ENCODE measurements at regions of chr11 and their contacts with region 1.

Region 1: DNA sequence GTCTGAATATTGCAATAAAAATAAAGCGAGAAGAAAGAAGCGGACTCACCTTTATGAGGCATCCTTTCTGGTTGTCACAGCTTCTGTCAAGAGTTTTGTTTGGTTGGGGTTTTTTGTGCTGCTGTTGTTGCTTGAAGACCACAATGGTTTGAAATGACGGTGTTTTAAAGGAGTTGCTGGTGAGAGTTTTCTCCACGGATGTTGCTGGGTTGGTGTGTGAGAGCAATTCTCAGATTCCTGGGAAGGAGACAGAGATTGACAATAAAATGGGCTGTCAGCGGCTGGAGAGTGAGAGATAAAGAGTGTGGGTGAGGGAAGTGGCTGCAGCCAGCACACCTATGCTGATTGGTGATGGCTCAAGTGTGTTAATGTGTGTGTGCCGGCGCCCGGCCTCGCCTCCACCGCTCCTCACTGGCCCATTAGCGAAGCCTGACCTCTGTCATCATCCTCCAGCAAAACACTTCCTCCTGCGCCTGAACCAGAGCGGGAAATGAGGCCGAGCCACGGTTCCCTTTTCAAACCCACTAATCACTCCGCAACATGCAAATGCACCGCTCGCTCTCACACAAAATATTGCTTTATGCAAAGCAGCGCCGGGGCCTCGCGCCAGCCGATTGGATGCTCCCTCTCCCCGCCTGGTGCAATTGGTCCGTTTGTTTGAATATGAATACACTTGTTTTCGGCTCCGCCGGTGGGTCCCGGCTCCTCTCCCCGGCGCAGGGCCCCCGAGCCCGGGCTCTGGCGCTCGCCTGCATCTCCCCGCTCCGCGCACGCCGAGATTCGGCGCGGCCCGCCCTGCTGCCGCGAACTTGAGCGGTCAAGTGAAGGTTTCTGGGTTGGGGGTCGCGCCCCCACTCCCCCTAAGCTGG is at the start of gene PAX6:
- DNase-seq: peak; percentile 82
- H3K4me3 Mint-ChIP-seq: peak within 1 kb of the TSS; percentile 73
- H3K27ac Mint-ChIP-seq: no peak within 1 kb of the TSS
- H3K4me1 Mint-ChIP-seq: peaks cover 47% of the 10 kb centered on the region
- H3K27me3 Mint-ChIP-seq: peaks cover 76% of the 10 kb centered on the region
- total RNA-seq, gene PAX6: 1.5 TPM

Region 2: DNA sequence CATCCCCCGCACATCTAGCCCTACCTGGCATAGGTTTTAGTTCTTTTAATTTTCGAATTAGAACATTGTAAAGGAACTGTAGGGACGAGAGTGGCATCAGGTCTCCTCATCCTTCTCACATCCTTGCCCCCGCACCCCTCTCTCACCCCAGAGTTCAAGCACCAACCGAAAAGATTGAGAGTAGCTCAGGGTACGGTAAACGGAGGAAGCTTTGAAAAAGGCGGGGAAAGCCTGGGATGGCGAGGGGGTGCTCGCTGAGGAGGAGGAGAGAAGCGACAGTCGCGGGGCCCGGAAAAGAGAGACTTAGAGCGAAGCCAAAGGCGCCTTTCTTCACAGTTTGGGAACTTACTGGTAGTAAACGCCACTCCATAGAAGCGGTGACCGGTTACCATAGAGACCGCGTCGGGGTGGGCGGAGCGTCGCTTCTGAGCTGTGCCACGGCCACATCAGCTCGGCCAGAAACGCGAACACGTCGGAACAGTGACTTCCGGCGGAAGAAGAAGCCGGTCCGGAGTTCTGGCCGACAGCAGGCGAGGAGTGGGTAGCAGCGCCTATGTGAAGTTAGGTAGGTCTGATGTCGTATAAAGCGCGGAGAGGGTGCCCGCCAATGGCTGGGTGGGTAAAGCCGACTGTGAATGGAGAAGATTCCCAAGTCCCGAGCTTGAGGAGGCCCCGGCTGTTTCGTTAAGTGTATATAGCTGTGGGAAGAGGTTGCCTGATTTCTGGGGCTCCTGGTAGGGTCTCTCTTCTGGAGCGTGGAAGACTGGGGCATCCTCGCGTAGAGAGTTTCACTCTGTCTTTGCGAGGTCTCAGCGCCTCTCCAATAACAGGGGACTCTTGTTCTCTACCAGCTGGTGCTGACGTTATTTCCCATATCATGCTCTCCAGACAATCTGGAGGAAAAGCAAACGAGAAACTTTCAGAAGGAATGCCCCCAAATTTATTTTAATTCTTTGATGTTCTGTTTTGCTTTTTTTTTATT is 441.4 kb before region 1 on chr11 and contains the starts of genes DCDC1 and DNAJC24:
- CTCF ChIA-PET with region 1: no interaction called
- intact Hi-C with region 1: loop called (anchors 5 kb)
- DNase-seq: peak; percentile 95
- H3K4me3 Mint-ChIP-seq: peak within 1 kb of the TSS; percentile 99
- H3K27ac Mint-ChIP-seq: peak within 1 kb of the TSS; percentile 91
- H3K4me1 Mint-ChIP-seq: peaks cover 55% of the 10 kb centered on the region
- H3K27me3 Mint-ChIP-seq: no peaks in the 10 kb centered on the region
- total RNA-seq, gene DCDC1: 0.25 TPM in 1 of 2 experiments, not detected in the other
- total RNA-seq, gene DNAJC24: 14.2 to 14.6 TPM

Region 3: DNA sequence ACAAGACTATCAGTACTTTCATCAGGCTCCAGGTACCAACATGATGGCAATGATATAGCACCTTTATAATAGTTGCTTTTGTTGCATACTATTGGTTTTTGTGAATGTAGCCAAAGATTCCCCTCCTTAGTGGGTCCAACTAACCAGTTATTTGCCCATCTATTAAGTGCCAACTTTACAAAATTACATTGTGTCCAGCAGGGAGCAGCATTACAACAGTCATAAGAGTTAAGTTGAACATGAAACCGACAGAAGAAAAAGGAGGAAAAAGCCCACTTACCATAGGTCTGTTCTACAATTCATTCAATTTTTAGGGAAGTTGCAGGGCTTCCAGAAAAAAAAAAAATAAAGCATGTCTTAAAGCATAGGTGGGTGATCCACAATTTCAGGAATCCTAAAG is 323.2 kb before region 1 on chr11:
- CTCF ChIA-PET with region 1: no interaction called
- intact Hi-C with region 1: loop called (anchors 5 kb)
- DNase-seq: peak; percentile 6
- H3K4me3 Mint-ChIP-seq: no peak overlapping the region
- H3K27ac Mint-ChIP-seq: no peak overlapping the region
- H3K4me1 Mint-ChIP-seq: peaks cover 11% of the 10 kb centered on the region
- H3K27me3 Mint-ChIP-seq: no peaks in the 10 kb centered on the region

Region 4: DNA sequence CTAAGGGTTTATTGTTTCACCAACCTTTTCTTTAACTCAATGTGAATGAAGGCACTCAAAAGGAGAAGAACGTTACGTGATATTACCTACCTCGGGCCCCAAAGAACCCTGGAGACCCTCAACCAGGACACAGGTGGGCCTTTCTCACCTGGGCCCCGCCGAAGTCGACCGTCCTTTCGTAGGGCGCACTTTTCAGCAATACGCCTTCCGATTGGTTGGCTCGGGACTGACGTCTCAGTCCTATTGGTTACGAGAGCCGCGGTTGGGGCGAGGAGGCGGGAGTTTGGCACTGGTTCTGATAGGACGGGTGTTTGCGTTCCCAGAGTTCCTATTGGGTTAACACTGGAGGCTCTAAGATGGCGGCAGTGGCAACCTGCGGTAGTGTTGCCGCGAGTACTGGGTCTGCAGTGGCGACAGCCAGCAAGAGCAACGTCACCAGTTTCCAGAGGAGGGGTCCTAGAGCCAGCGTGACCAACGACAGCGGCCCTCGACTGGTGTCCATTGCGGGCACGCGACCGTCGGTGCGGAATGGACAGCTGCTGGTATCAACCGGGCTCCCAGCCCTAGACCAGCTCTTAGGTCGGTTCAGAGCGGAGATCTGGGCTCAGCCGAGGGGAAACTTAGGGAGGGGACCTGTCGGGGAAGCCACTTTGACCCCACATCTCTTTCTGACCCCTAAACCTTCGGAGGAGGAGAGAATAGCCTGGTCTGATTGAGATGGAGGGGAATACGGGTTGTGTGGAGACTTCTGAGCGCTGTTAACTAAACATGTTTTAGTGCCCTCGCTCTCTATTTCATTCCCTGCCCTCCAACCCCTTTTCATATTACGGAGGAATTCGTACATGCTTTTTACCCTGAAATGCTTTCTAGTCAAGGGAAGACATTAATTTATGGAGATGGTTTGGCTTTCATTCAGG is 301.3 kb before region 1 on chr11 and contains the starts of genes ELP4 and IMMP1L:
- CTCF ChIA-PET with region 1: no interaction called
- intact Hi-C with region 1: loop called (anchors 1 kb)
- DNase-seq: peak; percentile 98
- H3K4me3 Mint-ChIP-seq: peak within 1 kb of the TSS; percentile 99
- H3K27ac Mint-ChIP-seq: peak within 1 kb of the TSS; percentile 90
- H3K4me1 Mint-ChIP-seq: peaks cover 36% of the 10 kb centered on the region
- H3K27me3 Mint-ChIP-seq: no peaks in the 10 kb centered on the region
- total RNA-seq, gene ELP4: 20.8 to 23.8 TPM
- total RNA-seq, gene IMMP1L: 15.6 to 15.9 TPM

Region 5: DNA sequence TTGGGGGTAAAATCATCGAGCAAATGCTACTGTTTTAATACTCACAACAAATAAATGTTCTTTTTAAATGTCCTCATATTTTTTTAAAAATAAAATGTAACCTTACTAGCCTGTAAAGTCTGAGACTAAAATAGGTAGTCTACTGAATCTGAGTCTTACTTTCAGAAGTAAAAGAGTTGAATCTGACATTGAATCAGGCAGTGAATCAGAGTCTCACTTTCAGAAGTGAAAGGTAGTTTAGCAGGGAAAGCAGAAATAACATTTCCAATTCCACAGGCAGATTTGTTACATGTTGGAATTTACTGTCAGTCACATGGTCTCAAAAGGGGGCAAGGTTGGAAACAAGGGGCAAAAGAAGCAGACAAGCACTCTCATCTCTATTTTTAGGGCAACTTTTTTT is 158.5 kb before region 1 on chr11:
- CTCF ChIA-PET with region 1: no interaction called
- intact Hi-C with region 1: loop called (anchors 5 kb)
- DNase-seq: no peak
- H3K4me3 Mint-ChIP-seq: no peak overlapping the region
- H3K27ac Mint-ChIP-seq: no peak overlapping the region
- H3K4me1 Mint-ChIP-seq: peaks cover 9% of the 10 kb centered on the region
- H3K27me3 Mint-ChIP-seq: no peaks in the 10 kb centered on the region

Region 6: GRCh38 chr11:31728432-31728831 is 82.6 kb before region 1 on chr11:
- CTCF ChIA-PET with region 1: no interaction called
- intact Hi-C with region 1: no loop called
- DNase-seq: no peak
- H3K4me3 Mint-ChIP-seq: no peak overlapping the region
- H3K27ac Mint-ChIP-seq: no peak overlapping the region
- H3K4me1 Mint-ChIP-seq: no peaks in the 10 kb centered on the region
- H3K27me3 Mint-ChIP-seq: no peaks in the 10 kb centered on the region

Region 7: GRCh38 chr11:31740131-31740530 is 70.9 kb before region 1 on chr11:
- CTCF ChIA-PET with region 1: no interaction called
- intact Hi-C with region 1: no loop called
- DNase-seq: no peak
- H3K4me3 Mint-ChIP-seq: no peak overlapping the region
- H3K27ac Mint-ChIP-seq: no peak overlapping the region
- H3K4me1 Mint-ChIP-seq: no peaks in the 10 kb centered on the region
- H3K27me3 Mint-ChIP-seq: no peaks in the 10 kb centered on the region

Region 8: GRCh38 chr11:32090545-32091373 is 279.7 kb after region 1 on chr11 and contains the start of gene RCN1:
- CTCF ChIA-PET with region 1: no interaction called
- intact Hi-C with region 1: loop called (anchors 2 kb)
- DNase-seq: peak; percentile 43
- H3K4me3 Mint-ChIP-seq: peak within 1 kb of the TSS; percentile 79
- H3K27ac Mint-ChIP-seq: peak within 1 kb of the TSS; percentile 86
- H3K4me1 Mint-ChIP-seq: peaks cover 39% of the 10 kb centered on the region
- H3K27me3 Mint-ChIP-seq: peaks cover 4% of the 10 kb centered on the region
- total RNA-seq, gene RCN1: 24.8 to 29.6 TPM